H1 (cell line): ENCODE measurements at regions of chr4 and their contacts with region 1.

Region 1: DNA sequence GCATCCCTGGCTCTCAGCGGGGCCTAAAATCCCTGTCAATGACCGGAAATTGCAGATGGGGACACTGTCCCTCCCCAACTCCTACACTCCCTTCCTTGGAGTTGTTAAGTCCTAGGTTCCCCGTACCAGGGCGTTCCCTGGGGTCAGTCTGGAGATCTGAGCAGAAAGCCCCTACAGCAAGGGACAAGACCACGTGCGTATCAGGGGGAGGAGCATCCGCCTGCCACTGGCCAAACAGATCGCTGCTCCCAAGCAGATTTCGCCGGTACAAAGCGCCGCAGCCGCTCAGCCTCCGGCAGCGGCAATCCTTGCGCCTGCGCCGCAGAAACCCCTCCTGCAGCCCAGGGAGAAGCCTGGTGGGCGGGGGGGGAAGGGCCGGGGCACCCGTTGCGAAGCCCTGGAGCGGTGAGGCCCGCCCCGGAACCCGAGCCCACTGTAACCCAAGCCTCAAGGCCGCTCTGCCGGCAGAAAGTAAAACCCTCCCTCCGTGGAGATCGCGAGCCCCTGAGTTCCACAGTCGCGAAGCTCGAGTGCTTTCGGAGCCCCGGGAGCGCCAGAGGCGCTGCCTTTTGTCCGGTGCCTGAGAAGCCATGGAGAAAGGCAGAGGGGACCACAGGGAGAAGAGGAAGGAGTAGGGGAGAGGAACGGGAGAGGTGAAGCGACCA is 2.7 kb downstream of the CRMP1 start:
- DNase-seq: peak; percentile 87 to 90
- H3K4me3 ChIP-seq: peak overlapping the region; percentile 28 to 70 (median 56)
- H3K27ac ChIP-seq: no peak overlapping the region
- H3K4me1 ChIP-seq: peaks cover 17 to 38% (median 30%) of the 10 kb centered on the region in 4 experiments
- H3K27me3 ChIP-seq: peaks cover 27 to 56% (median 51%) of the 10 kb centered on the region in 4 experiments
- CTCF ChIP-seq: no peak
- EP300 ChIP-seq: no peak
- POLR2A ChIP-seq: no peak
- RAD21 ChIP-seq: no peak

Region 2: GRCh38 chr4:5905714-5906113 is 15.5 kb after region 1 on chr4:
- CTCF ChIA-PET with region 1: interaction called, 4 read pairs
- POLR2A ChIA-PET with region 1: interaction called, 14 read pairs
- DNase-seq: peak; percentile 54 to 56
- H3K4me3 ChIP-seq: peak overlapping the region in 1 of 4 experiments; percentile 21; a peak in 1 of 8 replicates
- H3K27ac ChIP-seq: no peak overlapping the region
- H3K4me1 ChIP-seq: peaks cover 19 to 36% (median 24%) of the 10 kb centered on the region in 4 experiments
- H3K27me3 ChIP-seq: peaks cover 0 to 41% (median 30%) of the 10 kb centered on the region in 4 experiments; a peak in 6 of 7 replicates
- CTCF ChIP-seq: no peak
- EP300 ChIP-seq: peak in 1 of 2 experiments; percentile 18; a peak in 1 of 3 replicates
- POLR2A ChIP-seq: no peak
- RAD21 ChIP-seq: no peak